ENCODE measurements at regions of chr12 and their contacts with region 1.

Region 1: GRCh38 chr12:751192-751998 is 984 bp upstream of the WNK1 start:
- DNase-seq: peak; percentile 88 to 93
- ATAC-seq: peak; percentile 45 to 64
- H3K4me3 ChIP-seq: peak overlapping the region; percentile 48 to 92 (median 78)
- H3K27ac ChIP-seq: peak overlapping the region; percentile 97 to 99 (median 99)
- H3K4me1 ChIP-seq: peaks cover 18 to 22% of the 10 kb centered on the region in 2 donors
- H3K27me3 ChIP-seq: no peaks in the 10 kb centered on the region
- CTCF ChIP-seq: peak; percentile 76 to 84 (median 82)
- POLR2A ChIP-seq: peak; percentile 43 to 62

Region 2: GRCh38 chr12:569803-570434 is 181.5 kb before region 1 on chr12:
- in situ Hi-C with region 1: loop called (anchors 5 to 25 kb)
- intact Hi-C with region 1: loop called (anchors 1 kb)
- DNase-seq: peak; percentile 67 to 83
- ATAC-seq: peak; percentile 41 to 52
- H3K4me3 ChIP-seq: peak overlapping the region; percentile 63 to 74 (median 71)
- H3K27ac ChIP-seq: peak overlapping the region; percentile 86 to 95 (median 92)
- H3K4me1 ChIP-seq: peaks cover 20 to 22% of the 10 kb centered on the region in 2 donors
- H3K27me3 ChIP-seq: no peaks in the 10 kb centered on the region
- CTCF ChIP-seq: peak; percentile 87 to 97 (median 97)
- POLR2A ChIP-seq: no peak

Region 3: GRCh38 chr12:642633-643474 is 108.5 kb before region 1 on chr12:
- in situ Hi-C with region 1: loop called in 1 of 4 experiments (anchors 5 kb)
- intact Hi-C with region 1: loop called (anchors 1 kb)
- DNase-seq: peak; percentile 61 to 78
- ATAC-seq: peak; percentile 9 to 37
- H3K4me3 ChIP-seq: peak overlapping the region; percentile 72 to 81 (median 78)
- H3K27ac ChIP-seq: peak overlapping the region; percentile 91 to 99 (median 96)
- H3K4me1 ChIP-seq: peaks cover 57 to 84% of the 10 kb centered on the region in 2 donors
- H3K27me3 ChIP-seq: no peaks in the 10 kb centered on the region
- CTCF ChIP-seq: peak; percentile 13 to 61 (median 54)
- POLR2A ChIP-seq: peak; percentile 51 to 54

Region 4: DNA sequence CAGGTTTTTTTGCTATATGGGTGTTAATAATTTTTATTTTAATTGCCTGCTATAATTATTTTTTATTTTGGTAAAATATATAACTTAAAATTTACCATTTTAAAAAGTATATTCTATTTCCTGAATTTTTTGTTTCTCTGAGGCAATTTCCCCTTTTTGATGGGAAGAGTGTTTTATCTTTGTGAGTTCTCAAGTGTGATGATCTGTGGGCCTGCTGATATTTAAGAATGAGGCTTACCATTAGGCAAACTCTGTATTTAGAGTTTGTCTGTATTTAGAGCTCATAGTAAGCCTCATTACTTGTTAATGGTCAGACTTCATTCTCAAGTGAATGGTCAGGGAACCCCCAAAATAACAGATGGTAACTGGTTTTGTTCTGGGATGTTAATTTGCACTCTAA is 49.0 kb after region 1 on chr12:
- in situ Hi-C with region 1: no loop called
- intact Hi-C with region 1: no loop called
- DNase-seq: no peak
- ATAC-seq: no peak
- H3K4me3 ChIP-seq: no peak overlapping the region
- H3K27ac ChIP-seq: no peak overlapping the region
- H3K4me1 ChIP-seq: peaks cover 48 to 58% of the 10 kb centered on the region in 2 donors
- H3K27me3 ChIP-seq: no peaks in the 10 kb centered on the region
- CTCF ChIP-seq: no peak
- POLR2A ChIP-seq: no peak

Region 5: GRCh38 chr12:810671-811415 is 59.4 kb after region 1 on chr12:
- in situ Hi-C with region 1: loop called in 1 of 4 experiments (anchors 10 kb)
- intact Hi-C with region 1: loop called (anchors 2 kb)
- DNase-seq: no peak
- ATAC-seq: no peak
- H3K4me3 ChIP-seq: no peak overlapping the region
- H3K27ac ChIP-seq: peak overlapping the region in 3 of 4 donors; percentile 31 to 81 (median 44)
- H3K4me1 ChIP-seq: peaks cover 46 to 54% of the 10 kb centered on the region in 2 donors
- H3K27me3 ChIP-seq: no peaks in the 10 kb centered on the region
- CTCF ChIP-seq: no peak
- POLR2A ChIP-seq: no peak

Region 6: GRCh38 chr12:990661-991349 is 239.4 kb after region 1 on chr12 and contains the start of gene ERC1:
- in situ Hi-C with region 1: no loop called
- intact Hi-C with region 1: loop called (anchors 2 kb)
- DNase-seq: peak; percentile 86 to 88
- ATAC-seq: peak; percentile 83 to 87
- H3K4me3 ChIP-seq: peak within 1 kb of the TSS; percentile 76 to 96 (median 90)
- H3K27ac ChIP-seq: peak within 1 kb of the TSS; percentile 97 to 100 (median 99)
- H3K4me1 ChIP-seq: peaks cover 30 to 35% of the 10 kb centered on the region in 2 donors
- H3K27me3 ChIP-seq: no peaks in the 10 kb centered on the region
- CTCF ChIP-seq: peak in 2 of 5 experiments; percentile 13 to 25
- POLR2A ChIP-seq: peak; percentile 77 to 92
- total RNA-seq, gene ERC1: 20.3 to 39.1 (median 23.5) TPM

Measured in gastrocnemius medialis (tissue), 4 donors.